Panc1 (cell line): ENCODE measurements at regions of chr17 and their contacts with region 1.

Region 1: DNA sequence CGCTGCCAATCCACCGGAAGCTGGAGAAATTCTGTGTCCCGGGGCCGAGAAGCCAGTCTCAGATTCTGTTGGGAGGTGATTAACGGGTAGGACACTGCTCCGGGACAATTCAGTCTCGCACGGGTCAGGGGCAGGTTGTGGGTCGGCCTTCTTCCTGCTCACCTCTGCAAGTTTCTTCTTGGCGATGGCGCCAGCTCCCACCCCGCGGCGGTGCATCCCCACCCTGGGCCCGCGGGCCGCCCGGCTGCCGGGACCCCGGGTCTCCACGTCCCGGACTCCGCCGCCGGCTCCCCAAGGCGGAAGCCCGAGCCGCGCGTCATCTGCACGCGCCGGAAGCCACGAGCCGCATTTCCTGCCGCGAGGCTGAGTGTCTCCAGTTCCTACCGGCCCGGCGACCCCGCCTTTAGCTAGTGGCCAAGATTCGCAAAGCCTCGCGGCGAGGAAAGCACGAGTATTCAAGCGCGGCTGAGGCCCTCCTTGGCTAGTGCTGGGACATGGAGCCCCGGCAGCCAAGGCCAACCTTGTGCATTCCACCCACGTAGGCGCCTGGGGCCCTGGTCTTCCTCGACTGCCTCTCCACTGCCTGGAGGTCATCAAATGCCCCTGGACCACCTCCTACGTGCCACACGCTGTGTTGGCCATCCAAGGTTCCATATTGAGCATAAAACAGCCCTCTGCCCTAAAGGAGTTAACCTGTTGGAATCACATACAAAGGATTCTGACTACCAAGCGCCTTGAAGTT is at the start of gene SNF8:
- DNase-seq: no peak
- ATAC-seq: peak; percentile 98
- H3K4me3 ChIP-seq: peak within 1 kb of the TSS; percentile 60 to 100
- H3K27ac ChIP-seq: peak within 1 kb of the TSS; percentile 98
- H3K4me1 ChIP-seq: peaks cover 10% of the 10 kb centered on the region
- H3K27me3 ChIP-seq: no peaks in the 10 kb centered on the region
- CTCF ChIP-seq: no peak
- total RNA-seq, gene SNF8: 371 TPM

Region 2: DNA sequence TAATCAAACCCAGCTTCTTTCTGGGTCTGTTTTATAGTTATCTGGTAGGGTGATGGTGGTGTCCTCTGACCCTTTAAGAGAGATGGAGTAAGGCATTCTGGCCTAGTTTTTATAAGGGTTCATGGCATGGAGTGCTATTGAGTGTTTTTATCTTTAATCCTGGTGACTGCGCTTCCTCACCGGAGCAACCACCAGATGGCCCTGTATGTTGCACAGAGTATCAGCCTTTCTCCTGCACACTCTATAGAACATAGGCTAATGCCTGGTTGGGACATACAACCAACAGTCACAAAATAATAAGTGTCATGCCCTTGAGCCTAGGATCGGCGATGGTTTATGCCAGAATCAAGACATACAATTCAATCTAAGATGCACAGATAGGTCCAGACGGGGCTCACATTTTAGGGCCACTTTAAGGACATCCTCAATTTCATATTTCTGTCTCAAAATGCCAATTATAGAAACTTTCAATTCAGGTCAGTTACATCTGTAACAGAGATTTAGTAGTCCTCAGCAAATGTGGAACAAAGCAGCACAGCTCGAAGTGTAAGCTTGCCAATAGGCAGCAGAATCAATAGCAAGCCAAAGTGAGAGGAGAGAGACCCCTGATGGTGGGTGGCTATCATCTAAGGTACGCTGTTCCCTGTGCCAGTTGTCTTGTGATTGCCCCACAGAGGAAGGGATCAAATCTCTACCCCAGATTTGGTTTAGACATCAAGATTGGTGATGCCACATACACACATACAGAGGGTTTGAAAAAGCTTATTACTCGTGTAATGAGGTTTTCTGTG is 281.4 kb before region 1 on chr17:
- CTCF ChIA-PET with region 1: no interaction called
- POLR2A ChIA-PET with region 1: interaction called, 12 read pairs
- in situ Hi-C with region 1: no loop called
- intact Hi-C with region 1: no loop called
- DNase-seq: no peak
- ATAC-seq: peak; percentile 72
- H3K4me3 ChIP-seq: no peak overlapping the region
- H3K27ac ChIP-seq: no peak overlapping the region
- H3K4me1 ChIP-seq: no peaks in the 10 kb centered on the region
- H3K27me3 ChIP-seq: no peaks in the 10 kb centered on the region
- CTCF ChIP-seq: peak; percentile 65

Region 3: DNA sequence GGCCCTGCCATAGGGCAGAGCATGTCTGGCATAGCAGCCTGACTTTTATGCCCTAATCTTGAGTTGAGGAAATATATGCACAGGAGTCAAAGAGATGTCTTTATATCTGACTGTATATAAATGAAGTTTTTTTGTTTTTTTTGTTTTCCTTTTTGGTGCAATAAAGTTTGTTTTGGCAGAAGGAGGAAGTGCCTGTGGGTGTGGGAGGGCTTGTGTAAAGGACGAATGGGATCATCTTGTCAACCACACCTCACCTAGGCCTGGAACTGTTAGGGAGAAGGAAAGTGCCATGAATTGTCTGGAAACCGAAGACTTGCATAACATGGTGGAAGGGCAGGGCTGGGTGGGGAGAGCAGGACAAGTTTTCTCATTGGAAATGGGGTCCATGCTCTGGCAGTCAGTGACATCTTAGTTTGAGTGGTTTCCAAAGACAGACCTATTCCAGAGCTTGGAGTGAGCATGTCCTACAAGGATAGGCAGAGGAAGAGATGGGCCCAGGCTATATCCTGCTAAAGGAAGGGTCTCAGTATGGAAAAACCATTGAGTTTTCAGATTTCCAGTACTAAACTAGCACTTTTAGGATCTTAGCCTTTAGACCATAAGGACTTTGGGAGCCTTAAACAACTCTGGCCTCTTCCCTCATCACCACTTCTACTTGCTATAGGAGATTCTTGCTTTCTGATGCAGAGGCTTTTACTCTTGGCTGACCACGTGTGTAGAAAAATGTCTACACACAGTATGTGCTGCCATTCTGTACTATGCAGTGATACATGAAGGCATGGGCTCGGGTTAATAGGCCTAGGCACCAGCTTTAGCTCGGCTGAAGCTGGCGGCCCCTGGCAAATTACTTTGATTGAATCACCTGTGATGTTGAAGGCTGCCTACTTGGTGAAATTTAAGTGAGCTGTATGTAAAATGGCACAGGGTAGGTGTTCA is 15.5 kb before region 1 on chr17:
- CTCF ChIA-PET with region 1: interaction called, 7 read pairs
- POLR2A ChIA-PET with region 1: interaction called, 12 read pairs
- in situ Hi-C with region 1: no loop called
- intact Hi-C with region 1: no loop called
- DNase-seq: no peak
- ATAC-seq: peak; percentile 23
- H3K4me3 ChIP-seq: no peak overlapping the region
- H3K27ac ChIP-seq: peak overlapping the region; percentile 18; the same call in 1 of the 2 replicates
- H3K4me1 ChIP-seq: peaks cover 9% of the 10 kb centered on the region
- H3K27me3 ChIP-seq: no peaks in the 10 kb centered on the region
- CTCF ChIP-seq: no peak

Region 4: GRCh38 chr17:48973806-48974205 is 29.1 kb after region 1 on chr17:
- CTCF ChIA-PET with region 1: interaction called, 12 read pairs
- POLR2A ChIA-PET with region 1: no interaction called
- in situ Hi-C with region 1: no loop called
- intact Hi-C with region 1: loop called (anchors 2 kb)
- DNase-seq: no peak
- ATAC-seq: no peak
- H3K4me3 ChIP-seq: no peak overlapping the region
- H3K27ac ChIP-seq: peak overlapping the region; percentile 81; the same call in 1 of the 2 replicates
- H3K4me1 ChIP-seq: peaks cover 37% of the 10 kb centered on the region
- H3K27me3 ChIP-seq: no peaks in the 10 kb centered on the region
- CTCF ChIP-seq: no peak